ENCODE measurements at regions of chr12 and their contacts with region 1.

Region 1: DNA sequence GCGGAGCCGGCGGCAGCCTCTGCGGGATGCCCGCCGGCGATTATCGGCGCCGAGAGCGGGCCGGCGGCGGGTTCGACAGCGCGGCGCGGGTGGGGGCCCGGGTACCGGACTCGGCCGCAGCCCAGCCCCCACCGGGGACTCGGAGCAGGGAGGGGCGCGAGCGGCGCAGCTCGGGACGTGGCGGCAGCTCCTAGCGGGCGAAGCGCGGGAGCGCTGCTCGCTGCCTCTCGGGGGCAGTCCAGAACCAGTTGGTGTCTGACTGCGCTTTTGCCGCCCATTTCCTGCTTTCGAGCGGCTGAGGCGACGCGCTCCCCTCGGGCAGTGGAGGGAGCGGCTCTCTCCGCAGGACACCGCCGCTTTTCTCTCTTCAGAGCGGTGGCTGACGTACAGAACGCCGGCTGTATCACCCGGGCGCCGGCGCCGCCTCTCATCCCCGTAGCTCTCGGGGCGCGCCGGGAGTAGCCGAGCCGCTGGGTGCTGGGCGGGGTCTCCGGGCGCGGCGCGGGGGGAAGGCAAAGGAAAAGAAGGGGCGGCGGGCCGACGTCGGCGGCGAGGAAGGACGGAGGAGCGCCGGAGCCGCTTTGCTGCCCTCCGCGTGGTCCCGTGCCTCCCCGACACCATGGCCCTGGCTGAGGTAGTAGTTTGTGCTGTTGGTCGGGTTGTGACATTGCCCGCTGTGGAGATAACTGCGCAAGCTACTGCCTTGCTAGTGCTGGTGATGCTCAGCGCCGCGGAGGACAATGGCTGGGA is 136.6 kb downstream of the MON2 start:
- DNase-seq: no peak
- ATAC-seq: peak; percentile 91
- H3K4me3 ChIP-seq: peak overlapping the region; percentile 89 to 98
- H3K27ac ChIP-seq: peak overlapping the region; percentile 94
- H3K4me1 ChIP-seq: peaks cover 25% of the 10 kb centered on the region
- H3K27me3 ChIP-seq: no peaks in the 10 kb centered on the region
- CTCF ChIP-seq: peak; percentile 63

Region 2: DNA sequence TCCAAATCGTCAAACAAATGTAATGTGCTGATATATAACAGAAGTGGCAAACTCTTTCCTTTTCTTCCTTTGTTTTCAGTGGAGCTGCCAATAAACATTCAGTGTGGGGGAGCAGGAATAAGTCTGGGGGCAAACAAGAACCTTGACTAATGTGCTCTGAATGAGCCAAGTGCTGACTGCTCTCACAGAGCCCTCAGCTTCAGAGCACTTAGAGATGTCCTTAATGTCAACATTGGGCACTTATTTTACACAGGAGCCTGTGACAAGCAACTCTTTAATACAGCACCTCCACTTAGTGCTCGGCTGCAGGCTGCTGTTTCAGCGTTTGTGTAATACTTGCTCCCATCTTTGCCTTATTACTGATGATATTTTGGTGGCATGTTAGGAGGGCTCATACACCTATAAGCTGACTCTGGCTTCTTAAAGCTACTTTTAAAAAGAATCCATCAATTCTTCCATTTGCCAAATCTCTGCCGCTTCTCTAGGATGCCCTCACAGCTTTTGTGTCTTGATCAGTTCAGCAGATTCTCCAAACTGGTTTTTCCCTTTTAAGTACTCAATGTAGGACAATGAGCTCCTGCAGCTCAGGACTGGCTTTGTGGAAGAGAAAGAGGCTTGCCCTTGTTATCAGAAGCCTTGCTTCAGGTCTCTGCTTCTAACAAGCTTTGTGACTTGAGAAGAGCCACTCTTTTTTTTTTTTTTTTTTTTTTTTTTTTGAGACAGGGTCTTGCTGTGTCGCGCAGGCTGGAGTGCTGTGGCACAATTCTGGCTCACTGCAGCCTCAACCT is 70.0 kb after region 1 on chr12:
- CTCF ChIA-PET with region 1: no interaction called
- POLR2A ChIA-PET with region 1: no interaction called
- in situ Hi-C with region 1: no loop called
- intact Hi-C with region 1: no loop called
- DNase-seq: no peak
- ATAC-seq: no peak
- H3K4me3 ChIP-seq: no peak overlapping the region
- H3K27ac ChIP-seq: no peak overlapping the region
- H3K4me1 ChIP-seq: no peaks in the 10 kb centered on the region
- H3K27me3 ChIP-seq: no peaks in the 10 kb centered on the region
- CTCF ChIP-seq: no peak

Region 3: DNA sequence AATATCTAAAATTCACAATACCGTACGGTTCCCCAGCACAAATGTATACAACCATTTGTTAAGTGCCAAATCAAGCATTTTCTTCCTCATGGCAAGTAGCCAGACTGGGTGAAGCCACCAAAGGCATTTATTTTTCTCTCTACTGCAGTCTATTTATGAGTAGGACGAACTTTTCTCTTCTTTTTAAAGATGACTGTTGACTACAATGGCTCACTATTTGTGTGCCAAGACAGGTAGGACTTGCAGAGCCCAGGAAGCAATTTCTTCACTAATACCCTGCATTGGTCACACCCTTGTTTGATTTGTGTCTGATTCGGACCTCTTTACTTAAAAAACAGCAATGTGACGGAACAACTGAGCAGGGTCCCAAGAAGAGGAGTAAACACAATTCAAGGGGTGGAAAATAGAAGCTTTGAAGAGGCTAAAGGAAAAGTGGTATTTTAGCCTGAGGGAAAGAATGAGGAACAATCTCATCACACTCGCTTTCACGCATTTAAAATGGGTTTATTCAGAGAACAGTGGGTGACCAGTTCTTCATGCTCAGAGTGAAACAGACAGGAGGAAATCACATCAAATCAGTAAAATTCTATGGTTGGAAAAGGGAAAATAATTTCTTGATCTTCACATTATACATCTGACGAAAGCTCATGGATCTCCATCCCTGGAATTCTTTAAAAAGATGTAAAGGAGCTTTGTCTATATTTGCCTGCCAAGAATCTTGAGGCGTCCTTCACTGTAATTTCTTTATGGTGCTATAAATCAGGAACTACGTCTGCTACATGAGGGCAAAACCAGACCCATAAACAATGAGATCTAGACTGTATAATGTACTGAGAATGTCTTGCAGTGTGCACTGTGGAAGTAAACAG is 147.9 kb after region 1 on chr12:
- CTCF ChIA-PET with region 1: no interaction called
- POLR2A ChIA-PET with region 1: interaction called, 10 read pairs
- in situ Hi-C with region 1: no loop called
- intact Hi-C with region 1: no loop called
- DNase-seq: no peak
- ATAC-seq: no peak
- H3K4me3 ChIP-seq: no peak overlapping the region
- H3K27ac ChIP-seq: no peak overlapping the region
- H3K4me1 ChIP-seq: no peaks in the 10 kb centered on the region
- H3K27me3 ChIP-seq: no peaks in the 10 kb centered on the region
- CTCF ChIP-seq: no peak

Region 4: GRCh38 chr12:62793256-62794217 is 190.3 kb after region 1 on chr12:
- CTCF ChIA-PET with region 1: interaction called, 10 read pairs
- POLR2A ChIA-PET with region 1: no interaction called
- in situ Hi-C with region 1: loop called (anchors 25 kb)
- intact Hi-C with region 1: loop called (anchors 5 kb)
- DNase-seq: peak; percentile 74
- ATAC-seq: peak; percentile 80
- H3K4me3 ChIP-seq: no peak overlapping the region
- H3K27ac ChIP-seq: peak overlapping the region; percentile 76
- H3K4me1 ChIP-seq: peaks cover 8% of the 10 kb centered on the region; the same call in 1 of the 2 replicates
- H3K27me3 ChIP-seq: no peaks in the 10 kb centered on the region
- CTCF ChIP-seq: peak; percentile 93

Region 5: GRCh38 chr12:62799126-62799736 is 196.0 kb after region 1 on chr12:
- CTCF ChIA-PET with region 1: interaction called, 10 read pairs
- POLR2A ChIA-PET with region 1: no interaction called
- in situ Hi-C with region 1: loop called (anchors 25 kb)
- intact Hi-C with region 1: loop called (anchors 5 kb)
- DNase-seq: peak; percentile 63
- ATAC-seq: peak; percentile 83
- H3K4me3 ChIP-seq: no peak overlapping the region
- H3K27ac ChIP-seq: no peak overlapping the region; the same call in 1 of the 2 replicates
- H3K4me1 ChIP-seq: peaks cover 15% of the 10 kb centered on the region
- H3K27me3 ChIP-seq: no peaks in the 10 kb centered on the region
- CTCF ChIP-seq: peak; percentile 96

Region 6: GRCh38 chr12:63068857-63069442 is 465.7 kb after region 1 on chr12:
- CTCF ChIA-PET with region 1: no interaction called
- POLR2A ChIA-PET with region 1: no interaction called
- in situ Hi-C with region 1: no loop called
- intact Hi-C with region 1: loop called (anchors 10 kb)
- DNase-seq: peak; percentile 28
- ATAC-seq: peak; percentile 69; the same call in 1 of the 2 replicates
- H3K4me3 ChIP-seq: no peak overlapping the region
- H3K27ac ChIP-seq: no peak overlapping the region
- H3K4me1 ChIP-seq: no peaks in the 10 kb centered on the region
- H3K27me3 ChIP-seq: no peaks in the 10 kb centered on the region
- CTCF ChIP-seq: peak; percentile 64; the same call in 1 of the 2 replicates